Body of pancreas (tissue), 4 donors: ENCODE measurements at regions of chr12 and their contacts with region 1.

Region 1: DNA sequence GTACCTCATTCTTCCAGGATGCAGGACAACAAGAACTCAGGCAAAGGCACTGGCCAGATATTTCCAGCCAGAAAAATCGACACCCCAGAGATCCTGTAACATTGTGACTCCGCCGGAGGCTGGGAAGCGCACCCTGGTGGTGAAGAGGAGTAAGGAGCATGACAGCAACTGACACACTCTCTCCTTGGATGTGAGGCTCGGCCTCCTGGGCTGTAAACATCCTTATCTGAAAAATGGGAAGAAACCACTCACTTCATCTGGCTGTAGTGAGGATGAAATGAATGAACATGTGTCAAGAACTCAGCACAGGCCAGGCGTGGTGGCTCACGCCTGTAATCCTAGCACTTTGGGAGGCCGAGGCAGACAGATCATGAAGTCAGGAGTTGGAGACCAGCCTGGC is 27.5 kb downstream of the TCHP start:
- DNase-seq: peak; percentile 46 to 54 (median 52)
- ATAC-seq: no peak
- H3K4me3 ChIP-seq: no peak overlapping the region
- H3K27ac ChIP-seq: no peak overlapping the region
- H3K4me1 ChIP-seq: peaks cover 50% of the 10 kb centered on the region
- H3K27me3 ChIP-seq: no peaks in the 10 kb centered on the region
- CTCF ChIP-seq: peak; percentile 32 to 65 (median 51)
- POLR2A ChIP-seq: no peak

Region 2: DNA sequence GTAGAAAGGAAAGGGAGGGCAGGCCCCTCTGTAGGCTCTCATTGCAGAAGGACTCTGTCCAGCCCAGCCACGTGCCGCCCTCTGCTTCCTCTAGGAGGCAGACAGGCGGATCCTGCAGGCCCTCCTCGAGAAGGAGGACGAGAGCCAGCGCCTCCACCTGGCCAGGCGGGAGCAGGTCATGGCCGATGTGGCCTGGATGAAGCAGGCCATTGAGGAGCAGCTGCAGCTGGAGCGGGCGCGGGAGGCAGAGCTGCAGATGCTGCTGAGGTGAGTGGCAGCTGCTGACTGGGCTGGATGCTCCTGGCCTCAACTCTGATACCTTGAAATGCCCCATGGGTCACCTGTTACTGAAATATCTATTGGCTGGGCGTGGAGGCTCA is 16.7 kb before region 1 on chr12:
- intact Hi-C with region 1: no loop called
- DNase-seq: no peak
- ATAC-seq: no peak
- H3K4me3 ChIP-seq: no peak overlapping the region
- H3K27ac ChIP-seq: no peak overlapping the region
- H3K4me1 ChIP-seq: peaks cover 18% of the 10 kb centered on the region
- H3K27me3 ChIP-seq: no peaks in the 10 kb centered on the region
- CTCF ChIP-seq: no peak
- POLR2A ChIP-seq: no peak

Region 3: GRCh38 chr12:109982210-109982609 is 54.6 kb after region 1 on chr12:
- intact Hi-C with region 1: loop called (anchors 10 kb)
- DNase-seq: no peak
- ATAC-seq: no peak
- H3K4me3 ChIP-seq: no peak overlapping the region
- H3K27ac ChIP-seq: no peak overlapping the region
- H3K4me1 ChIP-seq: peaks cover 17% of the 10 kb centered on the region
- H3K27me3 ChIP-seq: no peaks in the 10 kb centered on the region
- CTCF ChIP-seq: no peak
- POLR2A ChIP-seq: no peak

Region 4: DNA sequence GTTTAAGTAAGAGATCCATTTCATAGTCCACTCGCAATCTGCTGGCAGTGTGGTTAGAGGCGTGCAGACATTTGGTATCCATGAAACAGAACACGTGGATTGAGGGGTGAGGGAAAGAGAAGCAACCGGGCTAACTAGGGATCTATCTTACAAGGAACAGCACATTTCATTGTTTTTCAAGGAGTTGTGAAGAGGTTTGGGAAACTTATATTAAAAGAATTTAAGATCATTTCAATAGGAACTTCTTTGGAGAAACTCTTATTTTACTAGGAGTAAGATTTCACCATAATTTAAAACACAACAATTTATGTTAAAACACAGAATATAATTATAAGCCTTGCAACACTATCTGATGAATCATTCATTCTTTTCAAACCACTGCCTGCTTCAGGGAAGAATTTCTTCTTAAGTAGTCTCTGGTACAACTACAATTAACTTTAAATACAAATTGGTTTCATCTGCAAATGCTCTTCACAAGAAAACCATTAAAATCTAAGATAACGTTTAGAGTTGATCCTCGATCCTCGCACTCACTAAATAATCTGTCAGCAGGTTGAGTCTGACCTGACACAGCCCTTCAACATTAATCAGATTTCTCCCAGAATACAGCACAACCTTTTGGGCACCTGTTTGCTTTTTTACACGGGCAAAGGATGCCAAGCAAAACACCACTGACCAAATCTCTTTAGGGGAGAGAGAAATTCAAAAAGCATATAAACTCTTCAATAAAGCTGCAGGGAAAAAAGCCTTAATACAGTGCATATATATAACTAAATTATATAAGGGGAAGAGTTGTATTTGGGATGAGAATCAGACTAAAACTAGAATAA is 628.2 kb after region 1 on chr12:
- intact Hi-C with region 1: no loop called
- DNase-seq: no peak
- ATAC-seq: no peak
- H3K4me3 ChIP-seq: no peak overlapping the region
- H3K27ac ChIP-seq: no peak overlapping the region
- H3K4me1 ChIP-seq: peaks cover 9% of the 10 kb centered on the region
- H3K27me3 ChIP-seq: no peaks in the 10 kb centered on the region
- CTCF ChIP-seq: no peak
- POLR2A ChIP-seq: no peak